ENCODE measurements at regions of chr1 and their contacts with region 1.

Region 1: GRCh38 chr1:25031966-25032667 is 102.0 kb upstream of the RUNX3 start:
- DNase-seq: peak; percentile 85
- ATAC-seq: peak; percentile 27
- H3K4me3 Mint-ChIP-seq: peak overlapping the region; percentile 52
- H3K27ac Mint-ChIP-seq: no peak overlapping the region
- H3K4me1 Mint-ChIP-seq: peaks cover 4% of the 10 kb centered on the region
- H3K27me3 Mint-ChIP-seq: no peaks in the 10 kb centered on the region

Region 2: DNA sequence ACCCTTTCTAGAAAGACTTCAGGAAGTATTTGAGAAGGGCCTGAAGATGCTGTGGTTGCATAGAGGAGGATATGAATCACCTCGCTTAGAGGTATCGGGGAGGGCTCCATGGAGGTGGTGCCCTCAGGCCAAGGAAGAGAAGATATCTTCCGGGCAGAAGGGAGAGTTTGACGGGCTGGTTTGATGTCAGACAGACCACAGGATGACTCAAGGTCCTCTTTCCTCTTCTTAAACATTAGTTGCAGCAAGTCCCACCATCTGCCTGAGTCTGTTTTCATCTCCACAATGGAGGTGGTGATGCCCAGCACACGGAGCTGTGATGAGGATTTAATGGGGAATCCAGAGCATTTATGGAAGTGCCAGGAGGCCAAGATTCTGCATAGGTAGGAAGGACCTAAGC is 77.0 kb before region 1 on chr1:
- CTCF ChIA-PET with region 1: interaction called, 338 read pairs
- DNase-seq: peak; percentile 94
- ATAC-seq: peak; percentile 77
- H3K4me3 Mint-ChIP-seq: peak overlapping the region; percentile 77
- H3K27ac Mint-ChIP-seq: peak overlapping the region; percentile 92
- H3K4me1 Mint-ChIP-seq: peaks cover 93% of the 10 kb centered on the region
- H3K27me3 Mint-ChIP-seq: no peaks in the 10 kb centered on the region

Region 3: GRCh38 chr1:24987875-24988557 is 44.1 kb before region 1 on chr1:
- CTCF ChIA-PET with region 1: interaction called, 21 read pairs
- DNase-seq: no peak
- ATAC-seq: no peak
- H3K4me3 Mint-ChIP-seq: no peak overlapping the region
- H3K27ac Mint-ChIP-seq: no peak overlapping the region
- H3K4me1 Mint-ChIP-seq: peaks cover 96% of the 10 kb centered on the region
- H3K27me3 Mint-ChIP-seq: no peaks in the 10 kb centered on the region

Measured in activated CD8-positive, alpha-beta memory T cell treated with anti-CD3 and anti-CD28 coated beads, Interleukin-2, amount 10 ng/mL, durations not matched to agents 7 days and 5 days (primary cell).